ENCODE measurements at regions of chr14 and their contacts with region 1.

Region 1: GRCh38 chr14:26323869-26324268 is 274.0 kb downstream of the NOVA1 start:
- DNase-seq: no peak
- ATAC-seq: no peak
- H3K4me3 ChIP-seq: no peak overlapping the region
- H3K4me3 Mint-ChIP-seq: no peak overlapping the region
- H3K27ac ChIP-seq: no peak overlapping the region
- H3K27ac Mint-ChIP-seq: no peak overlapping the region
- H3K4me1 ChIP-seq: no peaks in the 10 kb centered on the region
- H3K4me1 Mint-ChIP-seq: no peaks in the 10 kb centered on the region
- H3K27me3 ChIP-seq: no peaks in the 10 kb centered on the region
- H3K27me3 Mint-ChIP-seq: no peaks in the 10 kb centered on the region
- CTCF ChIP-seq: no peak

Region 2: GRCh38 chr14:26363689-26364088 is 39.8 kb after region 1 on chr14:
- CTCF ChIA-PET with region 1: no interaction called
- POLR2A ChIA-PET with region 1: no interaction called
- intact Hi-C with region 1: no loop called
- DNase-seq: no peak
- ATAC-seq: no peak
- H3K4me3 ChIP-seq: no peak overlapping the region
- H3K4me3 Mint-ChIP-seq: no peak overlapping the region
- H3K27ac ChIP-seq: no peak overlapping the region
- H3K27ac Mint-ChIP-seq: no peak overlapping the region
- H3K4me1 ChIP-seq: no peaks in the 10 kb centered on the region
- H3K4me1 Mint-ChIP-seq: no peaks in the 10 kb centered on the region
- H3K27me3 ChIP-seq: no peaks in the 10 kb centered on the region
- H3K27me3 Mint-ChIP-seq: no peaks in the 10 kb centered on the region
- CTCF ChIP-seq: no peak

Region 3: GRCh38 chr14:27184427-27184826 is 860.6 kb after region 1 on chr14:
- CTCF ChIA-PET with region 1: no interaction called
- POLR2A ChIA-PET with region 1: no interaction called
- intact Hi-C with region 1: loop called in 1 of 2 experiments (anchors 10 kb)
- DNase-seq: no peak
- ATAC-seq: no peak
- H3K4me3 ChIP-seq: no peak overlapping the region
- H3K4me3 Mint-ChIP-seq: no peak overlapping the region
- H3K27ac ChIP-seq: no peak overlapping the region
- H3K27ac Mint-ChIP-seq: no peak overlapping the region
- H3K4me1 ChIP-seq: no peaks in the 10 kb centered on the region
- H3K4me1 Mint-ChIP-seq: no peaks in the 10 kb centered on the region
- H3K27me3 ChIP-seq: no peaks in the 10 kb centered on the region
- H3K27me3 Mint-ChIP-seq: no peaks in the 10 kb centered on the region
- CTCF ChIP-seq: no peak